CD4-positive, alpha-beta memory T cell (primary cell): ENCODE measurements at regions of chr4 and their contacts with region 1.

Region 1: GRCh38 chr4:143254491-143255226 is 69.9 kb downstream of the USP38 start:
- DNase-seq: no peak
- H3K4me3 ChIP-seq: no peak overlapping the region
- H3K4me3 Mint-ChIP-seq: no peak overlapping the region
- H3K27ac ChIP-seq: no peak overlapping the region
- H3K27ac Mint-ChIP-seq: no peak overlapping the region
- H3K4me1 ChIP-seq: no peaks in the 10 kb centered on the region
- H3K4me1 Mint-ChIP-seq: no peaks in the 10 kb centered on the region
- H3K27me3 ChIP-seq: no peaks in the 10 kb centered on the region
- H3K27me3 Mint-ChIP-seq: peaks cover 1% of the 10 kb centered on the region in 2 donors

Region 2: DNA sequence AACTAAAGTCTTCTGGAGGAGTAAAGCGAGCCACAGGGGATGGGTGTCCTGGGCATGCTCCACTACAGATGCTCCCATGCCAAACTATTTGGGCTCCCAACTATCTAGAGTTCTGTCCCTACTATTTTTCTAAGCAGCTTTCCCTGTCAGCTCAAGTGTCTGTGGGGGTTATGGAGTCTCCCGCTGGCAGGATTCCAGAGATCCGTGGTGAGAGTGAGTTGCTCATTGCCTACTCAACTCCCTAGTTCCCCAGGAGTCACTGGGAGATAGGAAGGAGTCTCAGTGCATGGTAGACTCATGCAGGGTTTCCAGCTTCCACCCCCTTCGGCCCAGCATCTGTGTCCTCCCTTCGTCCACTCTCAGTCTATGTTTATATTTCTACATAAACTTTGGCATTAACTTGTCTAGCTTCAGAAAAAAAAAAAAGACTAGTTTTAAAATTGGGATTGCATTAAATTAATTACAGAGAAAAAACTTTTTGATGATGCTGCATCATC is 353.4 kb before region 1 on chr4:
- CTCF ChIA-PET with region 1: no interaction called
- POLR2A ChIA-PET with region 1: no interaction called
- intact Hi-C with region 1: no loop called
- DNase-seq: no peak
- H3K4me3 ChIP-seq: no peak overlapping the region
- H3K4me3 Mint-ChIP-seq: no peak overlapping the region
- H3K27ac ChIP-seq: no peak overlapping the region
- H3K27ac Mint-ChIP-seq: no peak overlapping the region
- H3K4me1 ChIP-seq: no peaks in the 10 kb centered on the region
- H3K4me1 Mint-ChIP-seq: no peaks in the 10 kb centered on the region
- H3K27me3 ChIP-seq: no peaks in the 10 kb centered on the region
- H3K27me3 Mint-ChIP-seq: peaks cover 8 to 9% of the 10 kb centered on the region in 2 donors

Region 3: GRCh38 chr4:143127621-143128020 is 127.0 kb before region 1 on chr4:
- CTCF ChIA-PET with region 1: no interaction called
- POLR2A ChIA-PET with region 1: no interaction called
- intact Hi-C with region 1: loop called (anchors 5 kb)
- DNase-seq: no peak
- H3K4me3 ChIP-seq: no peak overlapping the region
- H3K4me3 Mint-ChIP-seq: no peak overlapping the region
- H3K27ac ChIP-seq: no peak overlapping the region
- H3K27ac Mint-ChIP-seq: no peak overlapping the region
- H3K4me1 ChIP-seq: no peaks in the 10 kb centered on the region
- H3K4me1 Mint-ChIP-seq: no peaks in the 10 kb centered on the region
- H3K27me3 ChIP-seq: no peaks in the 10 kb centered on the region
- H3K27me3 Mint-ChIP-seq: peaks cover 1 to 2% of the 10 kb centered on the region in 2 donors